Spleen (tissue), 13 donors: ENCODE measurements at regions of chr5 and their contacts with region 1.

Region 1: DNA sequence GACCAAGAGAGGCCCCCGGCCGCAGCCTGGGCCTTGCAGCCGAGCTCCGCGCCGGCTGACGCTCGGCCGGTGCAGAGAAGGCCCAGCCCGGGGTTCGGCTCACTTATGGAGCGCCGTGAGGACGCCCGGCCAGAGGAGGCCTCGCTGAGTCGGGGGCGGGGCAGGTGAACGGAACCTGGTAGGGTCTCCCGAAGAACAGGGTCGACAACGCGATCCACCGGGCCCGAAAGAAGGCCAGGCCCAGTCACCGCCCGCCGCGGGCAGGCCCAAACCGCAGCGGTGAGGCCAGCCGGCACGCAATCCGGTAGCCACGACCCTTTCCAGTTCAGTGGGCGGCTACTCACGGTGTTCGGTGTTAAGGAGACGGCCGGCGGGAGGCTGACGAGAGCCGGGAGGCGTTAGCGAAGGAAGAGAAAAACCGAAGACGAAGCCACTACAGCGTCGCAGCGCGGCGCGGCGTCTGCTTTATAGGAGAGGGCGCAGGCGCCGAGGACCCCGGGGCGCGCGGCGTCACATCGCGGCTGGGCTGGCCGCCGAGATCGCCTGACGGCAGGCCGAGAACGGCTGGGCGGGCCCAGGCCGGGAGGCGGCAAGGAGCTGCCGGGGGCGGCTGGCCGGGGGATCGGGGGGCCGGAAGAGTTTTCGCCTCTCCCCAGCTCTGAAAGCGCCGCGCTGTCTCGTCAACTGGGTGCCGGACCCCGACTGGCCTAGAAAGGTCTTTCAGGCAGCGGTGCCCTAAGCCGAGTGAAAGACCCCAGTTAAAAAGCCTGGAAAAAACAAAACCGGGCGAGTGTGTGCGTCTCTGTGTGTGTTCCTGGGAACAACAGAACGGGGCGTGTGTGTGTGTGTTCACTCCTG is at the start of gene SKP1:
- DNase-seq: peak; percentile 96
- H3K4me3 ChIP-seq: peak within 1 kb of the TSS; percentile 72 to 97 (median 88)
- H3K27ac ChIP-seq: peak within 1 kb of the TSS; percentile 97 to 100 (median 99)
- H3K4me1 ChIP-seq: peaks cover 25 to 54% (median 38%) of the 10 kb centered on the region in 6 donors
- H3K27me3 ChIP-seq: no peaks in the 10 kb centered on the region
- CTCF ChIP-seq: no peak
- POLR2A ChIP-seq: peak; percentile 66 to 96 (median 84)
- total RNA-seq, gene SKP1: 121 to 246 (median 193) TPM

Region 2: GRCh38 chr5:133861161-133861737 is 315.5 kb before region 1 on chr5:
- intact Hi-C with region 1: no loop called
- DNase-seq: peak; percentile 37
- H3K4me3 ChIP-seq: no peak overlapping the region
- H3K27ac ChIP-seq: no peak overlapping the region
- H3K4me1 ChIP-seq: no peaks in the 10 kb centered on the region
- H3K27me3 ChIP-seq: peaks cover 0 to 2% (median 0%) of the 10 kb centered on the region in 7 donors
- CTCF ChIP-seq: no peak
- POLR2A ChIP-seq: no peak

Region 3: GRCh38 chr5:134738133-134738962 is 561.6 kb after region 1 on chr5 and contains the start of gene CAMLG:
- intact Hi-C with region 1: loop called (anchors 10 kb)
- DNase-seq: peak; percentile 100
- H3K4me3 ChIP-seq: peak within 1 kb of the TSS; percentile 62 to 83 (median 74)
- H3K27ac ChIP-seq: peak within 1 kb of the TSS; percentile 82 to 95 (median 92)
- H3K4me1 ChIP-seq: peaks cover 8 to 69% (median 50%) of the 10 kb centered on the region in 6 donors
- H3K27me3 ChIP-seq: no peaks in the 10 kb centered on the region
- CTCF ChIP-seq: peak; percentile 65 to 93 (median 80)
- POLR2A ChIP-seq: peak; percentile 83 to 91 (median 88)
- total RNA-seq, gene CAMLG: 16.3 to 30.5 (median 22.0) TPM